ENCODE measurements at regions of chr10 and their contacts with region 1.

Region 1: DNA sequence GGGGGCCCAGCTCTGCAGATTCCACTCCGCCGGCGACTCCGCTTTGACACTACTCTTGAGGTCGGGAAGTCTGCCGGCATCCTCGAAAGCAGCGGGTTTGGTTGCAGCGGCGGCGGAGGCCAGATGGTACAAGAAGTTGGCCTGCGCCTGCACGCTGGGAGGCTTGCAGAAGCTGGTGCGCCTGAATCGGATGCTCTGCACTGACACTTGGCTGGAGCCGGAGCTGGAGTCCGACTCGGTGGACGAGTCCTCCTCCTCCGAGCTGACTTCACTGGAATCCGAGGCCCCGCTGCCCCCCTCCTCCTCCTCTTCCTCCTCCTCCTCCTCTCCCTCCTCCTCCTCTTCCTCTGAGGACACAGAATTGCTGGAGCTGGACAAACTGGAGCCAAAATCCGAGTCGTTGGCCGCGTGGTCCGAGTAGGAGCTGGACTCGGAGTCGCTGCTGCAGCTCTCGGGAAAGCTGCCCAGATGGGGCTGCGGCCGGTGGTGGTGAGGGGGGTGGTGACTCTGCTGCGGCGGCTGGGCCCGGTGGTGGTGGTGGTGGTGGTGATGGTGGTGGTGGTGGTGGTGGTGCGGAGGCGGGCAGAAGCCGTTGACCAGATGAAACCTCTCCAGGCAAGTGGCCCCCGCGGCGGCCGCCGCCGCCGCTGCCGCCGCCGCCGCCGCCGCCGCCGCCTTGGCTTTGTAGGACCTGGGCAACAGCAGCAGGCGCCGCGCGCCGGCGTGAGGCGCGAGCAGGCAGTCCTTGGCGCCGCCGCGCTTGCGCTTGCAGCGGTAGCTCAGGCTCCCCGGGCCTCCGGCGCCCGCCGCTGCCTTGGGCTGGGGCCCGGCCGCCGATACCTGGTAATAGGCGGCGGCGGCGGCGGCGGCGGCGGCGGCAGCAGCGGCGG is 9.0 kb downstream of the SKIDA1 start:
- DNase-seq: no peak
- H3K4me3 ChIP-seq: peak overlapping the region; percentile 57
- CTCF ChIP-seq: no peak

Region 2: DNA sequence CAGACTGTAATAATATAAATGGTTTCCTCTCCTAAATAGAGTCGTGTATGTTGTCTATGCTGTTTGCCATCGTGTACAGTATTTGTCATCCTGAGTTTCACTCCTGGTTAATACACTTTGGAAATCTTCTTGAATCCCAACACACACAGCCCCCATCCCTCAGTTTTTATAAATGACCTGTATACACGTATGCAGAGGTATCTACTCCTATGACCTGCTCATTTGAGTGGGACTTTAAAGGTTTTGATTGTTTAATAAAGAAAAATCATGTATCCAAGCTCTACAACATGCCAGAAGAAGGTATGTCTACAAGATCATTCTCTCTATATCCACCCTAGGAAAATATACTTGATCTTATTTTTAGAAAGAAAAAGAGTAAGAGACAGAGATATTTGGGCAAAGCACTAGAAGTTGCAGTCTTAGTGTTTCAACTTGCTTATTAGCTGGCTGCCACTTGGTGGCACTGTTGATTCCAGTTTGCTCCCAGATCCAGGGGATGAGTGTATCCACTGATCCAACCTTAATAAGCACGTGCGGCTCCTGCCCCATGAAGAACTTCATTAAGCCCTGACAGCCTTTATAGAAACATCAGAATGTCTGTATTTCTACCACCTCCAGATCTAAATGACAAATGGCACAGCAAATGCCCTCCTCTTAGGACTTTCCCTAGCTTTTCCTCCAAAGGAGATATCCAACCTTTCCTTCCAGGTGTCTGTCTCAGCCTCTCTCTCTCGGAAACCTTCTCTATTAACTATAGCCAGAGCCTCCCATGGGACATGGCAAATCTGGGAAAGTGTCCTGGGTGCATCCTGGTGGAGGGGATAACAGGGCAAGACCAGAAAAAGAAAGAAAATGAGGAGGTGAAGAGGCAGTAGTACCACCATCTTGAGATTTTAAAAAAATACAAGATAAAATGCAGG is 437.8 kb before region 1 on chr10:
- in situ Hi-C with region 1: loop called (anchors 25 kb)
- DNase-seq: peak; percentile 68
- H3K4me3 ChIP-seq: no peak overlapping the region
- CTCF ChIP-seq: peak; percentile 80

Region 3: GRCh38 chr10:21278491-21279239 is 237.8 kb before region 1 on chr10:
- in situ Hi-C with region 1: loop called (anchors 25 kb)
- DNase-seq: peak; percentile 91
- H3K4me3 ChIP-seq: no peak overlapping the region
- CTCF ChIP-seq: peak; percentile 76

Region 4: DNA sequence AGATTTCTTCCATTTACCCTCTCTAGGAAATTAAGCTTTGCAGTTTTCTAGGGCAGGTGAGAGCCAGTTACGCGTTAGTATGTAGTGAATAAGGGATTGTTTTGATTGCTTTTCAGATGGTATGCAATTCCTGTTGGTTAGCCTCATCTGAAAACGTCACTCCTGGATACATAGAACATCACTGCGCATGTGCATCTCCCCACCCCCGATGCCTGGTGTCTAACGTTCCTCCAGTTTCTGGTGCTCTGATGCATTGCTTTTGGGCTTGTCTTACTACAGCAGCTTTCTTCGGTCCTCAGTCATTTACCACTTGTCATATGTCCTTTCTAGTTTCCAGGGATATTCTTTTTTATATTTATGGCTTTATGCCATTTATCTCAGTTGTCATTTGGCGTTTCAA is 40.0 kb after region 1 on chr10:
- in situ Hi-C with region 1: no loop called
- DNase-seq: no peak
- H3K4me3 ChIP-seq: no peak overlapping the region
- CTCF ChIP-seq: no peak

Region 5: DNA sequence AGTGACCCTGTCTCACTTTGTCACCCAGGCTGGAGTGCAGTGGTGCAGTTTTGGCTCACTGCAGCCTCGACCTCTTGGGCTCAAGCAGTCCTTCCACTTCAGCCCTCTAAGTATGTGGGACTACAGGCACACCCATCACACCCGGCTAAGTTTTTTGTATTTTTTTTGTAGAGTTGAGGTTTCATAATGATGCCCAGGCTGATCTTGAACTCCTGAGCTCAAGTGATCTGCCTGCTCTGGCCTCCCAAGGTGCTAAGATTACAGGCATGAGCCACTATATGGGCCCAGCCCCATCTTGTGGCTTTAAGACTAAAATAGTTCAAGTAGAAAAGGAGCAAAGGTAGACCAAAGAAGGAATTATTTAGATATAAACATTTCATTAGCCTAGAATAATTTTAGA is 83.1 kb after region 1 on chr10:
- in situ Hi-C with region 1: no loop called
- DNase-seq: no peak
- H3K4me3 ChIP-seq: no peak overlapping the region
- CTCF ChIP-seq: no peak

Measured in astrocyte of the cerebellum (primary cell).